ENCODE measurements at regions of chr15 and their contacts with region 1.

Region 1: DNA sequence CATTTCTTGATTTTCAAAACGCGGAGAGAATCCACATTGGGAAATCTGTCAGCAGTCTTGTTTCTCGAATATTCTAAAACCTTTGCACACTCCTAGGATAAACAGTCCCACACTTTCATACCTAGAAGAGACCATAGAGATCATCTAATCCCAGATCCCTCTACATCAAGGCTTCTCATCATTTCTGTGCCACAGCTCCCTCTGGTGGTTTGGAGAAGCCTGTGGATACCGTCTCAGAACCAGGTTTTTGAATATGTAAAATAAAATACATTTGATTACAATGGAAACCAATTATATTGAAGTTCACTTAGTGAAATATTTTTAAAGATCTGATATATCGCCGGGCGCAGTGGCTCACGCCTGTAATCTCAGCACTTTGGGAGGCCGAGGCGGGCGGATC is 211.9 kb upstream of the GOLGA6L4 start:
- DNase-seq: peak in 1 of 2 experiments; percentile 48
- H3K4me3 ChIP-seq: no peak overlapping the region
- H3K27ac ChIP-seq: no peak overlapping the region
- H3K4me1 ChIP-seq: no peaks in the 10 kb centered on the region
- H3K27me3 ChIP-seq: no peaks in the 10 kb centered on the region
- CTCF ChIP-seq: peak in 2 of 3 experiments; percentile 54 to 67; a peak in 3 of 4 replicates
- EP300 ChIP-seq: no peak
- POLR2A ChIP-seq: no peak
- RAD21 ChIP-seq: peak; percentile 54 to 56

Region 2: GRCh38 chr15:83943849-83944404 is 79.7 kb before region 1 on chr15:
- CTCF ChIA-PET with region 1: no interaction called
- POLR2A ChIA-PET with region 1: no interaction called
- DNase-seq: no peak
- H3K4me3 ChIP-seq: no peak overlapping the region
- H3K27ac ChIP-seq: no peak overlapping the region
- H3K4me1 ChIP-seq: no peaks in the 10 kb centered on the region; a peak in 1 of 7 replicates
- H3K27me3 ChIP-seq: no peaks in the 10 kb centered on the region
- CTCF ChIP-seq: no peak
- EP300 ChIP-seq: no peak
- POLR2A ChIP-seq: no peak
- RAD21 ChIP-seq: no peak

Region 3: DNA sequence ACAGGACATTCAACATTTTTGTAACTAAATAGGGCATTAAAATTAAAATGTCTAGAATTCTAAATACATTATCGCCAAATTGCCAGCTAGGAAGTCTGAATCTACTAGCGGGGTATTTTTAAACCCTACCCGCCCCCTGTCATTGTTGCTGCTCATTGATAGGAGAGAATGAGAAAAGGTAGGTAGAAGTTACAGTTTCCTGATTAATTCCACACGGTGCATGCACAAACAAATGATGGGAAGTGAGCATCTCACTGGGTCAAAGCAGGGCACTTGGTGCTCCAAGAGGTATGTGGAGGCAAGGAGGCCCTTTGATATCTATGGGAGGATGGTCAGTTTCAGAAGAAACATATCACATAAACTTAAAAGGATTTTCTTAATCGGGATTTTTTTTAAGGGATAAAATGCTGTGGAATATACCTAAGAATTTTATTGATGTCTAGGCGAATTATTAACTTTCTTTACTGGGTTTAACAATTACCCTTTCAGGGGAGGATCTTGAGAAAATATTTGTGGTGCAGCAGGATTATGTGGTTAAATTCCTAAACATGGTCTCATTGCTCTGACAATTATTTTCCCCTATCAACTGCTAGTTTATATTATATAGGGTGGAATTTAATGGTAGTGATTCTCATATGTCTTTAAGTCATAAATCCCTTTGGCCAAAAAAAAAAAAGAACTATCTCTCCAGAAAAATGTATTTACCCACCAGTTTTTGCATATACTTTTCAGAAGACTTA is 24.1 kb before region 1 on chr15:
- CTCF ChIA-PET with region 1: interaction called, 10 read pairs
- POLR2A ChIA-PET with region 1: no interaction called
- DNase-seq: no peak
- H3K4me3 ChIP-seq: no peak overlapping the region
- H3K27ac ChIP-seq: no peak overlapping the region
- H3K4me1 ChIP-seq: no peaks in the 10 kb centered on the region
- H3K27me3 ChIP-seq: no peaks in the 10 kb centered on the region
- CTCF ChIP-seq: no peak
- EP300 ChIP-seq: no peak
- POLR2A ChIP-seq: no peak
- RAD21 ChIP-seq: no peak